ENCODE measurements at regions of chr12 and their contacts with region 1.

Region 1: DNA sequence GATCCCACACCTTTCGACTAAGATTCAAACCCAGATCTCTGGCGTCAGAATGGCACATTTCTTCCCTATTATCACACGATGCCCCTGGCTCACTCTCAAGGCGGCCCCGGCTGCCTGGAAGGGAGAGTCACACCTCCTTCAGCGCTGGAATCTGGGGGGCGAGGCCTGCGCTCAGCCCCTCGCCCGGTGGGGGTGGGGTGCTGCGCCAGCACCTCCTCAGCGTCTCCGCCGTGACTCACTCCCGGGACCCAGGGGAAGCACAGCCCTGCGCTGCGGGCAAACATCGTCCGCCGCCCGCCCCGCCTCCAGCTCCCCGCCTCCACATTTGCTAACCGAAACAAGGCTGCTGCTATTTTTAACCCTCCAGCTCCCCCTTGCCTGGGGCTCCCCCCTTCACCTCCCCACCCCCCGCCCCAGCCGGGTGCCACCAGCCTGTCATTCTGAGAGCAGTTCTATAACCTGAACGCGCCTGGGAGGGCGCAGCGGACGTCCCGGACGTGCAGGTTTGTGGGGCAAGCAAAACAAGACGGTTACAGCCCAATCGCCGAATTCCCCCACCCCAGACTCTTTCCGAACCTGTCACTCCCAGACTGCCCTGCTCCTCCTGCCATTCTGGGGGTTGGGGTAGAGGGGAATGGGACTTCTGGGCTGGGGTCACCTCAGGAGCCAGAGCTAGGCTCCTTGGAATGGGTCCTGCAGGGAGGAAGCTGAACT is 6.7 kb downstream of the HDAC7 start:
- DNase-seq: peak; percentile 68 to 96 (median 88)
- ATAC-seq: peak; percentile 64 to 77
- H3K4me3 Mint-ChIP-seq: peak overlapping the region; percentile 81 to 99 (median 88)
- H3K27ac Mint-ChIP-seq: peak overlapping the region; percentile 92 to 99 (median 98)
- H3K4me1 Mint-ChIP-seq: peaks cover 55 to 97% (median 94%) of the 10 kb centered on the region in 4 donors
- H3K27me3 Mint-ChIP-seq: no peaks in the 10 kb centered on the region

Region 2: GRCh38 chr12:47779301-47779942 is 33.5 kb before region 1 on chr12:
- POLR2A ChIA-PET with region 1: interaction called, 10 read pairs
- DNase-seq: peak; percentile 78 to 94 (median 90)
- ATAC-seq: peak; percentile 96 to 97
- H3K4me3 Mint-ChIP-seq: no peak overlapping the region
- H3K27ac Mint-ChIP-seq: peak overlapping the region in 7 of 10 donors; percentile 17 to 95 (median 62)
- H3K4me1 Mint-ChIP-seq: peaks cover 16 to 28% (median 23%) of the 10 kb centered on the region in 4 donors
- H3K27me3 Mint-ChIP-seq: no peaks in the 10 kb centered on the region

Region 3: DNA sequence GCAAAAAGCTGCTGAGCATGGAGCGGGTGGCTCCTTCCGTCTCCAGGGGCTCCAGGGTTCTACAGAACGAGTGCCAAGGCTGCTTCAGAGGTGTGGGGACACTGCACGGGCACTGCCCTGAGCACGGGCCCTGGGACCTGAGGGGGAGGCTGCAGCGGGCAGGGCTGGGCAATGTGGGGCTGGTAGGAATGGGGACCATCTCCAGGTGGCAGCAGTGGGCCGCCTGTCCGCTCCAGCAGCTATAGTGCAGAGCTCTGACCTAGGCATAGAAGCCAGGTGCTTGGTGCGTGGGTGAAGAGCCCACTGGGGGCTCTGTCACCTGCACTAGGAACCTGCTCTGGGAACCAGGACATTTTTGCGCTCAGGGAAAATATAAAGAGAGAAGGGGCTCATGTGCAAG is 15.5 kb before region 1 on chr12:
- POLR2A ChIA-PET with region 1: interaction called, 66 read pairs
- DNase-seq: peak in 8 of 10 donors; percentile 41 to 76 (median 58)
- ATAC-seq: peak; percentile 88 to 90
- H3K4me3 Mint-ChIP-seq: peak overlapping the region in 7 of 10 donors; percentile 44 to 81 (median 68)
- H3K27ac Mint-ChIP-seq: peak overlapping the region; percentile 51 to 95 (median 87)
- H3K4me1 Mint-ChIP-seq: peaks cover 26 to 51% (median 42%) of the 10 kb centered on the region in 4 donors
- H3K27me3 Mint-ChIP-seq: no peaks in the 10 kb centered on the region

Region 4: GRCh38 chr12:47828608-47829536 is 15.9 kb after region 1 on chr12:
- POLR2A ChIA-PET with region 1: interaction called, 514 read pairs
- DNase-seq: no peak
- ATAC-seq: no peak
- H3K4me3 Mint-ChIP-seq: peak overlapping the region in 6 of 10 donors; percentile 34 to 72 (median 43)
- H3K27ac Mint-ChIP-seq: peak overlapping the region; percentile 14 to 92 (median 75)
- H3K4me1 Mint-ChIP-seq: peaks cover 53 to 96% (median 91%) of the 10 kb centered on the region in 4 donors
- H3K27me3 Mint-ChIP-seq: no peaks in the 10 kb centered on the region

Region 5: GRCh38 chr12:47837190-47838171 is 24.5 kb after region 1 on chr12:
- POLR2A ChIA-PET with region 1: interaction called, 514 read pairs
- DNase-seq: peak; percentile 33 to 77 (median 66)
- ATAC-seq: peak; percentile 24 to 29
- H3K4me3 Mint-ChIP-seq: peak overlapping the region in 4 of 10 donors; percentile 4 to 31 (median 10)
- H3K27ac Mint-ChIP-seq: peak overlapping the region; percentile 11 to 89 (median 68)
- H3K4me1 Mint-ChIP-seq: peaks cover 36 to 61% (median 57%) of the 10 kb centered on the region in 4 donors
- H3K27me3 Mint-ChIP-seq: no peaks in the 10 kb centered on the region